Endothelial cell of umbilical vein (primary cell): ENCODE measurements at regions of chr13 and their contacts with region 1.

Region 1: DNA sequence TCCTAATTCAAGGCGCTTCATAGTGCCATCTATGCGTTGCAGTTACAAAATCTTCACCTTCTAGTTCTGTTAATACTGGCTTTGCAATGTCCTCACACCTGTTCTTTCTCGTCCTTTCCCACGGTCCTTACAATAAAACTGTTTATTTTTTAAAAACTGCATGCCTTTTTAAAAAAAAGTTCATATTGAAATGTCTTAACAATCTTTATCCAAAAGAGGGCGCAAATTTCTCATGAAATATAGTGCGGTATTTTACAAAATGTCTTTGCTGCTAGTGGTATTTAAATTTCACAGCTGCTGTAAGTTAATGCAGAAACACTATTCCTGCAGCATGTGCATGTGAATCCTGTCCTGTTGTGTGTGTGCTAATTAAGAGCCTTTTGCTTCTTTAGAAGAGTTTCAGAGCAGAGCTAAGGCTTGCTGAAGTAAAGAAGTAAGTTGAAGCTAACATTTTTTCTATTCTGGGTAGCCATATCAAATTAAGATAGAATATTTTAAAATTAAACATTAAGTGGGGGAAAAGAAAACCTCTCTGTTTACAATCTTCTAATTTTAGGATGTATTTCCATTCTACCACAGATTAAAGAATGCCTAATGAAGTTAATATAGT is 15.8 kb upstream of the CLDN10 start:
- DNase-seq: peak; percentile 62
- H3K4me3 ChIP-seq: no peak overlapping the region
- H3K27ac ChIP-seq: no peak overlapping the region
- H3K4me1 ChIP-seq: peaks cover 34% of the 10 kb centered on the region
- H3K27me3 ChIP-seq: no peaks in the 10 kb centered on the region
- CTCF ChIP-seq: peak in 1 of 2 donors; percentile 25
- POLR2A ChIP-seq: no peak

Region 2: DNA sequence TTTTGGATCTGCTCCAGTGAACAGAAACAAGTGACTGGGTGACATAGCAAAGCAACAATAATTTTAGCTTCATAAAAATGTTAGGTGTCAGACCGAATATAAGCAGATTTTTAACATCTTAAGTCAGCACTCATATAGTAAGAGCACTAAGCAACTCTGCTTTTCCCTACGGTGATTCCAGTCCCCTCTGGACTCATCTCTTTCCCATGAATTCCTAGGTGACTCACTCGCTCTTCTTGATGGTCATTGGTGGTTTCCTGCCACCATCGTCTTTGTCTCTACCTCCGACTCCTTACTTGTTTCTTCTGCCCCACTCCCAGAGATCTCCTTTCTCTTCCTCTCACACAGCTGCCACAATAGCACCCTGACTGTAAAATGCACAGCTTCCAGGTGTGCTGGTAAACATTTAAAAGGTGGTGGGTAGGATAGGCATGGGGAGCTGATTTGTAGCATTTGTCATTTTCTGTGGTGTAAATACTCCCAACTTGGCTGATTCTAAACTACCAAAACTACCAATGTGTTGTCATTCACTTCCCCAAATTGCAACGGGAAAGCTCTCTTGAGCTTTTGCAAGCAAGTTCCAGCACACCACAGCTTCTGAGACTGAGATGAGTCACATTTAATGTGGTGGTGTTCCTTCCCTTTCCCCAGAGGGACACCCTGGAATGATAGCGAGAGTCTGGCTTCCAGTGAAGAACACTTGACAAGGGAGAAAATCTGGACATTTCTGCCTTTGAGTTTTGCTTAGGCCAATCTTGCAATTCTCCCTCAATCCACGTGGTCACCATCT is 27.0 kb before region 1 on chr13:
- CTCF ChIA-PET with region 1: interaction called, 10 read pairs
- POLR2A ChIA-PET with region 1: no interaction called
- dilution Hi-C with region 1: no loop called
- intact Hi-C with region 1: no loop called
- DNase-seq: no peak
- H3K4me3 ChIP-seq: no peak overlapping the region
- H3K27ac ChIP-seq: no peak overlapping the region
- H3K4me1 ChIP-seq: peaks cover 6% of the 10 kb centered on the region
- H3K27me3 ChIP-seq: peaks cover 0 to 7% of the 10 kb centered on the region in 2 experiments
- CTCF ChIP-seq: no peak
- POLR2A ChIP-seq: no peak

Region 3: GRCh38 chr13:95552539-95553441 is 16.1 kb after region 1 on chr13 and contains the start of gene CLDN10:
- CTCF ChIA-PET with region 1: interaction called, 34 read pairs
- POLR2A ChIA-PET with region 1: no interaction called
- dilution Hi-C with region 1: no loop called
- intact Hi-C with region 1: no loop called
- DNase-seq: no peak
- H3K4me3 ChIP-seq: peak within 1 kb of the TSS in 2 of 3 experiments; percentile 3 to 40
- H3K27ac ChIP-seq: no peak within 1 kb of the TSS
- H3K4me1 ChIP-seq: no peaks in the 10 kb centered on the region
- H3K27me3 ChIP-seq: peaks cover 12 to 21% of the 10 kb centered on the region in 2 experiments
- CTCF ChIP-seq: peak; percentile 32 to 54
- POLR2A ChIP-seq: no peak
- total RNA-seq, gene CLDN10: 0.49 TPM in 1 of 2 replicates, not detected in the other

Region 4: GRCh38 chr13:95603887-95604533 is 67.3 kb after region 1 on chr13:
- CTCF ChIA-PET with region 1: interaction called, 13 read pairs
- POLR2A ChIA-PET with region 1: no interaction called
- dilution Hi-C with region 1: no loop called
- intact Hi-C with region 1: loop called (anchors 5 kb)
- DNase-seq: peak; percentile 66
- H3K4me3 ChIP-seq: no peak overlapping the region
- H3K27ac ChIP-seq: peak overlapping the region; percentile 64
- H3K4me1 ChIP-seq: peaks cover 26% of the 10 kb centered on the region
- H3K27me3 ChIP-seq: no peaks in the 10 kb centered on the region
- CTCF ChIP-seq: no peak
- POLR2A ChIP-seq: no peak

Region 5: GRCh38 chr13:95660981-95661581 is 124.3 kb after region 1 on chr13:
- CTCF ChIA-PET with region 1: interaction called, 26 read pairs
- POLR2A ChIA-PET with region 1: interaction called, 3 read pairs
- dilution Hi-C with region 1: no loop called
- intact Hi-C with region 1: loop called (anchors 1 kb)
- DNase-seq: peak; percentile 61
- H3K4me3 ChIP-seq: no peak overlapping the region
- H3K27ac ChIP-seq: no peak overlapping the region
- H3K4me1 ChIP-seq: no peaks in the 10 kb centered on the region
- H3K27me3 ChIP-seq: peaks cover 8 to 10% of the 10 kb centered on the region in 2 experiments
- CTCF ChIP-seq: peak; percentile 45 to 52
- POLR2A ChIP-seq: no peak

Region 6: DNA sequence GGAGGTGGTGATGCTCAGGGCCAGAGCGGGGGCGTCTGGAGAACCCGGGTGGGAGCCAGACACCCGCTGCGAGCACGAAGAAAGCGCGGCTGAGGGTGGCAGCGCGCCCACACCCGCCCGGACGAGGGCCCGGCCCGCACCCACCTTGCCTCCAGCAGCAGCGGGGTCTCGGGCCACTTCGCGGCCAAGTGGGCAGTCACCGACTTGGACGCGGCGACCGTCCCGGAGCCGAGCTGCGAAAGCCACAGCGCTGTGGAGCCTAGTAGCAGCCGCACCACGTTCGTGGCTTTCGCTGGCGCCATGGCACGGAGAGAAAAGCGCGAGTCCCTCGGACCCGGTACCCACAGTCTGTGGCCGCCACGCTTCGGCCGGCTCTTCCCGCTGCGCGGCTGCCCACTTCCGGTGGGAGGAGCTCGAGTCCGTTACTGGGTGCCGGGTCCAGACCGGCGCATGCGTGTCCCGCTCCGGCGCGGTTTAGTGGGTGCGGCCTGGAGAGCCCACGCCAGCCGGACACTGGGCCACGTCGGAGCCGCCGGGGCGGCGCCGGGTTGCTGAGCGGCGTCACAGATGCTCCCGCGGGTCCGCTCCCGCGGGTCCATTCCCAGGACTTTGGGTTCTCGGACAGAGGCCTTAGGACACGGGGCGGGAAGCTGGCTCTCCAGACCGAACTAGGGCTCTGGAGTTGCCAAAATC is 516.4 kb after region 1 on chr13 and contains the start of gene UGGT2:
- CTCF ChIA-PET with region 1: no interaction called
- POLR2A ChIA-PET with region 1: no interaction called
- dilution Hi-C with region 1: no loop called
- intact Hi-C with region 1: loop called (anchors 1 kb)
- DNase-seq: peak; percentile 94
- H3K4me3 ChIP-seq: peak within 1 kb of the TSS; percentile 92 to 96 (median 94)
- H3K27ac ChIP-seq: peak within 1 kb of the TSS; percentile 95
- H3K4me1 ChIP-seq: peaks cover 3% of the 10 kb centered on the region
- H3K27me3 ChIP-seq: peaks cover 0 to 6% of the 10 kb centered on the region in 2 experiments
- CTCF ChIP-seq: no peak
- POLR2A ChIP-seq: peak; percentile 80
- total RNA-seq, gene UGGT2: 25.1 and 25.7 TPM in 2 replicates